ENCODE measurements at regions of chr12 and their contacts with region 1.

Region 1: GRCh38 chr12:130747867-130748740 is 32.0 kb upstream of the RIMBP2 start:
- DNase-seq: peak; percentile 67 to 89 (median 78)
- H3K4me3 ChIP-seq: no peak overlapping the region
- H3K27ac ChIP-seq: no peak overlapping the region
- H3K4me1 ChIP-seq: peaks cover 2% of the 10 kb centered on the region
- H3K27me3 ChIP-seq: no peaks in the 10 kb centered on the region
- CTCF ChIP-seq: peak; percentile 31 to 53 (median 45)
- EP300 ChIP-seq: no peak
- POLR2A ChIP-seq: no peak

Region 2: GRCh38 chr12:130041983-130042812 is 705.9 kb before region 1 on chr12:
- intact Hi-C with region 1: loop called in 1 of 4 experiments (anchors 10 kb)
- DNase-seq: peak in 4 of 5 donors; percentile 21 to 60 (median 28)
- H3K4me3 ChIP-seq: no peak overlapping the region
- H3K27ac ChIP-seq: no peak overlapping the region
- H3K4me1 ChIP-seq: no peaks in the 10 kb centered on the region
- H3K27me3 ChIP-seq: no peaks in the 10 kb centered on the region
- CTCF ChIP-seq: peak in 1 of 3 donors; percentile 47
- EP300 ChIP-seq: no peak
- POLR2A ChIP-seq: no peak